Dorsolateral prefrontal cortex (tissue), 120 donors: ENCODE measurements at regions of chr17 and their contacts with region 1.

Region 1: GRCh38 chr17:38658741-38659345 is 15.9 kb downstream of the EPOP start:
- DNase-seq: peak; percentile 36 to 84 (median 71)
- H3K4me3 ChIP-seq: no peak overlapping the region
- H3K27ac ChIP-seq: peak overlapping the region in 57 of 59 donors; percentile 36 to 99 (median 92)
- H3K27me3 ChIP-seq: no peaks in the 10 kb centered on the region
- CTCF ChIP-seq: no peak

Region 2: DNA sequence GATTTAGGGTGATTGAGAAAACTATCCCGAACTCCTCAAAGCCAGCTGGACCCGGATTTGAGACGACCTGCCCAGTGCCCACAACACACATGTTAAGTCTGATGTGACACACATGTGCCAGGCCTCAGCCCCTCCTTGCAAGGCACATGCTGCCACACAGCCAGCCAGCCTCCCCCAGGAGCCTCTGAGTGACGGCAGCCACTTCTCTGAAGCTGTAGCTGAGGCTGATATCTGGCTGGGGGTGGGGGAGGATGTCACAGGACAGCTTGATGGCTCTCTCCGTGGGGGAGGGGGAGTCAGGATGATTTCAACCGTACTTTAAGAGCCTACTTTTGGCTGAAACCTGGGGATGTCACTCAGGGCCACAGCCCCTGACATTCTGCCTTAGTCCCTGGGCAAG is 94.0 kb before region 1 on chr17:
- intact Hi-C with region 1: no loop called
- DNase-seq: peak in 2 of 10 donors; percentile 48 to 69
- H3K4me3 ChIP-seq: peak overlapping the region in 6 of 59 donors; percentile 4 to 34 (median 17)
- H3K27ac ChIP-seq: peak overlapping the region in 58 of 59 donors; percentile 48 to 99 (median 97)
- H3K27me3 ChIP-seq: peaks cover 0 to 13% (median 0%) of the 10 kb centered on the region in 45 donors
- CTCF ChIP-seq: no peak

Region 3: GRCh38 chr17:38605888-38606645 is 52.8 kb before region 1 on chr17 and contains the start of gene SRCIN1:
- intact Hi-C with region 1: loop called (anchors 2 kb)
- DNase-seq: peak; percentile 65 to 80 (median 75)
- H3K4me3 ChIP-seq: peak within 1 kb of the TSS; percentile 45 to 76 (median 63)
- H3K27ac ChIP-seq: peak within 1 kb of the TSS in 58 of 59 donors; percentile 48 to 94 (median 85)
- H3K27me3 ChIP-seq: peaks cover 0 to 20% (median 0%) of the 10 kb centered on the region in 45 donors
- CTCF ChIP-seq: peak; percentile 52 to 93 (median 80)
- total RNA-seq, gene SRCIN1: 80.9 to 338 (median 151) TPM